ENCODE measurements at regions of chr3 and their contacts with region 1.

Region 1: DNA sequence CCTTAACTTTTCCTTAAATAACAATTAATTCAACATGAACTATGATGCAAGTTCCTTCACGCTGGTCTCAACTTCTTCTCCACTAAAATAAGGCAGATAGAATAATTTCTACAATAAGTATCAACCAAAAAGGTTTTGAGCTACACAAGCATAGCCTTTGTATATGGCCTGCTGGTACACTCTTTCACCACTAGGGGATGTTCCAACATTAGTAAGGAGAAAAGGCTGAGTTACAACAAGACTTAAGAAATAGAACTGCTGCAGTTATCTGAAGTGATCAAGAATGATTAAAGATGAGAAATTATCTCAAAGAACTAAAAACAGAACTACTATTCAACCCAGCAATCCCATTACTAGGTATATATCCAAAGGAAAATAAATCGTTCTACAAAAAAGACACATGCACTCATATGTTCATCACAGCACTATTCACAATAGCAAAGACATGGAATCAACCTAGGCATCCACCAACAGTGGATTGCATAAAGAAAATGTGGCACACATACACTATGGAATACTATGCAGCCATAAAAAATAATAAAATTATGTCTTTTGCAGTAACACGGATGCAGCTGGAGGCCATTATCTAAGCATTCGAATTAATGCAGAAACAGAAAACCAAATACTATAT is 14.4 kb downstream of the ATP13A3 start:
- DNase-seq: peak in 14 of 35 experiments; percentile 6 to 75 (median 16)
- ATAC-seq: peak; percentile 77 to 90 (median 86)
- H3K4me3 ChIP-seq: no peak overlapping the region
- H3K4me3 Mint-ChIP-seq: no peak overlapping the region
- H3K27ac ChIP-seq: no peak overlapping the region
- H3K27ac Mint-ChIP-seq: no peak overlapping the region
- H3K4me1 ChIP-seq: no peaks in the 10 kb centered on the region
- H3K4me1 Mint-ChIP-seq: peaks cover 18 to 28% (median 20%) of the 10 kb centered on the region in 3 donors
- H3K27me3 ChIP-seq: no peaks in the 10 kb centered on the region
- H3K27me3 Mint-ChIP-seq: no peaks in the 10 kb centered on the region

Region 2: GRCh38 chr3:194486540-194487288 is 14.3 kb after region 1 on chr3 and contains the start of gene ATP13A3:
- CTCF ChIA-PET with region 1: interaction called in 1 of 2 experiments, 33 read pairs
- POLR2A ChIA-PET with region 1: interaction called, 3 read pairs
- DNase-seq: peak; percentile 80 to 95 (median 89)
- ATAC-seq: peak; percentile 83 to 88 (median 86)
- H3K4me3 ChIP-seq: peak within 1 kb of the TSS; percentile 78 to 82
- H3K4me3 Mint-ChIP-seq: peak within 1 kb of the TSS; percentile 76 to 92 (median 89)
- H3K27ac ChIP-seq: peak within 1 kb of the TSS; percentile 82
- H3K27ac Mint-ChIP-seq: peak within 1 kb of the TSS; percentile 81 to 90
- H3K4me1 ChIP-seq: peaks cover 5 to 32% of the 10 kb centered on the region in 2 experiments
- H3K4me1 Mint-ChIP-seq: peaks cover 48 to 58% (median 50%) of the 10 kb centered on the region in 3 donors
- H3K27me3 ChIP-seq: no peaks in the 10 kb centered on the region
- H3K27me3 Mint-ChIP-seq: no peaks in the 10 kb centered on the region
- total RNA-seq, gene ATP13A3: 48.1 to 71.7 (median 52.0) TPM

Region 3: GRCh38 chr3:194573691-194574437 is 101.5 kb after region 1 on chr3:
- CTCF ChIA-PET with region 1: interaction called, 4 to 18 read pairs
- POLR2A ChIA-PET with region 1: no interaction called
- DNase-seq: peak in 20 of 35 experiments; percentile 6 to 55 (median 17)
- ATAC-seq: peak; percentile 76 to 92 (median 84)
- H3K4me3 ChIP-seq: no peak overlapping the region
- H3K4me3 Mint-ChIP-seq: no peak overlapping the region
- H3K27ac ChIP-seq: no peak overlapping the region
- H3K27ac Mint-ChIP-seq: no peak overlapping the region
- H3K4me1 ChIP-seq: no peaks in the 10 kb centered on the region
- H3K4me1 Mint-ChIP-seq: no peaks in the 10 kb centered on the region
- H3K27me3 ChIP-seq: peaks cover 2 to 28% of the 10 kb centered on the region in 2 experiments
- H3K27me3 Mint-ChIP-seq: peaks cover 21 to 28% of the 10 kb centered on the region in 2 donors

Region 4: DNA sequence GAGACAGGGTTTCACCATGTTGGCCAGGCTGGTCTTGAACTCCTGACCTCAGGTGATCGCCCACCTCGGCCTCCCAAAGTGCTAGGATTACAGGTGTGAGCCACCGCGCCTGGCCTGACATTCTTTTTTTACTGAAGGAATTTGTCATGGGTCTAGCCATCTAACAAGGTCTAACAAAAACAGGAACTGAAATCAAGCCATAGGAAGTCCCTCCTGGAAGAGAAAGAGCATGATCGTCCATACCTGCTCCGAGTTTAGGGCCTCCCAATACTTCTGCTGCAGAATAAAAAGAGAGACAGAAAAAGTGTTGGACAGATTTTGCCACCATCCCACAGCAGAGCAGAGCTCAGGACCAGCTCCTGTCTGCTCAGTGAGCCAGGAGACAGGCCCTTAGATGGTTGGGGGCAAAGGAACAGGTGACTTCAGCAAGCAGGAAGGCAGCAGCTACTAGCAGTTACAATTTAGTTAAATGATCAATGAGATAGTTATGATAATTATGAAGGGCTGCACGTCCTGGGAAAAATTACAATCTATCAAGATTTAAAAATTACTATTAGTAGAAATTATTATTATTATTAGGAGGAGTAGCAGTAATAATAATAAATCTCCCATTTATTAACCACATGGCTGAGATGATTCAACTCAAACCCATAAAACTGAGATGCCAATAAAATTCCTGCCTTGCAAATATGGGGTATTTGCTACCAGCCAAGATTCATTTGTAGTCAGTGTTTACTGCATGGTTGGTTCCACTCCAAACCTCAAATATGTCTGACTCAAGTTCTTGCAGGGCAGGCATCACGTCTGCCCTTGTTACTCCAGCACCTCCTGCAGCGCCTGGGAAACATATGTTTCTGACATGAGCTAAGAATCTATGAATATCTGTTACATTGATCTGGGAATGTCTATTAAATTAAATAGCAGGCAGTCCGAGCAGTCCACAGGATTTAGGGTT is 120.7 kb after region 1 on chr3:
- CTCF ChIA-PET with region 1: interaction called, 3 to 19 read pairs
- POLR2A ChIA-PET with region 1: interaction called in 1 of 2 experiments, 8 read pairs
- DNase-seq: no peak
- ATAC-seq: no peak
- H3K4me3 ChIP-seq: no peak overlapping the region
- H3K4me3 Mint-ChIP-seq: no peak overlapping the region
- H3K27ac ChIP-seq: no peak overlapping the region
- H3K27ac Mint-ChIP-seq: no peak overlapping the region
- H3K4me1 ChIP-seq: no peaks in the 10 kb centered on the region
- H3K4me1 Mint-ChIP-seq: peaks cover 4 to 7% (median 5%) of the 10 kb centered on the region in 3 donors
- H3K27me3 ChIP-seq: no peaks in the 10 kb centered on the region
- H3K27me3 Mint-ChIP-seq: no peaks in the 10 kb centered on the region

Region 5: DNA sequence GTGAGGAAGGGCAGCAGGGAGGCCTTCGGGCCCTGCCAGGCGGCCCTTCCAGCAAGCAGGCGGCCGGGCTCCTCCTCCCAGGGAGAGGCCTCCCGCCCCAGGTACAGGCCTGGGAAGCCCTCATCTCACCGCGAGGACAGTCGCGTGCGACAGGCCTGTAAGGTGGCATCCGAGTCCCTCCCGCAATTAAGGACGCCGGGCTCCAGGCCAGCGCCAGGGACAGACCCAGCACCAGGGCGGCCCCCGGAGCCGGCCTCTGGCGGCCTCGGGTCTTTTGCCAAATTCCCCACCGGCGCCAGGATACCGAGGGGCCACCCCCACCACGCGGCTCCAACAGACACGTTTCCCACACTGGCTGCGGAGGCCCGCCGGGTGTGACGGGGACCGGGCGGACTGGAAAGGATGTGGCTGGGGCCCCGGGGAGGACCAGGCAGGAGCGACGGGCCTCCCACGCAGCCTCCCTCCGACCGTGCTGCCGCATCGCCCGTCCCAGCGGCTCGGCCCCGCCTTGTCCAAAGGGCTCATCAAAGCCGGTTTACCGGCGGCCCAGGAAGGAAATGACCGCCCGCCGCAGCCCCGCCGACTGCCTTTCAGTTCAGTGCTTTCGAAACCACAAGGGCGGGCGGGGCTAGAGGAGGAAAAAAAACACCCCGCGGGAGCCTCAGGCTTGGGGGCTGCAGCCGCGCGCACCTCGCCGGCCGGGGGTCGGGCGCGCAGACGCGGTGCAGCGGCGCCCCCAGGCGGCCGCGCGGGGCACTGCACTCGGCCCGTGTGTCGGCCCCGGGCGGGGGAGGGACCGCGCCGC is 787.3 kb after region 1 on chr3:
- CTCF ChIA-PET with region 1: no interaction called
- POLR2A ChIA-PET with region 1: no interaction called
- DNase-seq: peak; percentile 75 to 93 (median 84)
- ATAC-seq: peak; percentile 77 to 91 (median 79)
- H3K4me3 ChIP-seq: peak overlapping the region; percentile 52 to 73
- H3K4me3 Mint-ChIP-seq: peak overlapping the region; percentile 56 to 81 (median 63)
- H3K27ac ChIP-seq: peak overlapping the region; percentile 91
- H3K27ac Mint-ChIP-seq: peak overlapping the region; percentile 90 to 91
- H3K4me1 ChIP-seq: peaks cover 8 to 28% of the 10 kb centered on the region in 2 experiments
- H3K4me1 Mint-ChIP-seq: peaks cover 21 to 24% (median 22%) of the 10 kb centered on the region in 3 donors
- H3K27me3 ChIP-seq: no peaks in the 10 kb centered on the region
- H3K27me3 Mint-ChIP-seq: no peaks in the 10 kb centered on the region

Measured in T-cell (primary cell).